ENCODE measurements at regions of chr12 and their contacts with region 1.

Region 1: DNA sequence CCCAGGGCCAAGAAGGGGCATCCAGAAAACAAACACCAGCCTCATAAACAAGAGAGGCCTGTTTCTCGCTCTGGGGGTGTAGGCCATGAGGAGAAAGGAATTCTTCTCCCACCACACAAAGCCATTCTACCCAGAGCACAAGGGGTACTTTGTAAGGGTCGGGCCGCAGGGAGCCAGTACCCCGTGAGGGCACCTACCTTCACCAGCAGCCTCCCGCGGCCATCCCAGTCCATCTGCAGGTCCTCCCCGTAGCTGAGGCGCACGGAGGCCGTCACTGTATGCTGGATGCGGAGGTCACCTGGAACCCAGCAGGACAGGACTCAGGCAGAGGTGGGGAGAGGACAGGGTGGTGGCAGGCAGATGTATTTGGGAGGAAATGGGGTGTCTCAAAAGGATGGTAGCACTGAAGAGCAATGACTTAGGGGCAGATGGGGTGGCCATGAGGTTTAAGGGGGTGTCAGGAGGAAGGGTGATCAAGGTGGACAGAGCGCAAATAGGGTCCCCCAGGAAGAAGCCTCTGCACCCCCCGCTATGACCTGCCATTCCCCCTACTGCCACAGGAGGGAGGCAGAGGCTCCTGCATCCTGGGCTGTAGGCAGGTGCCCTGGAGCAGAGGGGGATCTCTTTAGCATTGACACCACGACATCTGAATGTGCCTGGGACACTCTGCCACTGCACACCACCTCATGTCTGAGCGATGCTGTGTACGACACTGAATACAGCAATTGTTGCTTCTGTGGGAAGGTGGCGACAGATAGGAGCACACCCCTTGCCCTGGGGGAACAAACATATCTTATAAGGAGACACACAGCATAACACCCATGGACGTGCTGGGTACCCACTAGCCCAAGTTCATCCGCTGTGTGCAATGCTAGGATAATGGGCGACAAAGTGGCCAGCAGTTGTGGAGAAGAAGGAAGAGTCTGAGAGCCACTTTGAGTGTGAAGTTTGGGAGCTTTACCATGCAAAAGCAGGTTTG is 61.4 kb downstream of the VWF start:
- DNase-seq: peak; percentile 56
- ATAC-seq: peak; percentile 75
- H3K4me3 ChIP-seq: no peak overlapping the region
- H3K27ac ChIP-seq: no peak overlapping the region
- H3K4me1 ChIP-seq: no peaks in the 10 kb centered on the region
- H3K27me3 ChIP-seq: no peaks in the 10 kb centered on the region
- CTCF ChIP-seq: peak; percentile 81

Region 2: DNA sequence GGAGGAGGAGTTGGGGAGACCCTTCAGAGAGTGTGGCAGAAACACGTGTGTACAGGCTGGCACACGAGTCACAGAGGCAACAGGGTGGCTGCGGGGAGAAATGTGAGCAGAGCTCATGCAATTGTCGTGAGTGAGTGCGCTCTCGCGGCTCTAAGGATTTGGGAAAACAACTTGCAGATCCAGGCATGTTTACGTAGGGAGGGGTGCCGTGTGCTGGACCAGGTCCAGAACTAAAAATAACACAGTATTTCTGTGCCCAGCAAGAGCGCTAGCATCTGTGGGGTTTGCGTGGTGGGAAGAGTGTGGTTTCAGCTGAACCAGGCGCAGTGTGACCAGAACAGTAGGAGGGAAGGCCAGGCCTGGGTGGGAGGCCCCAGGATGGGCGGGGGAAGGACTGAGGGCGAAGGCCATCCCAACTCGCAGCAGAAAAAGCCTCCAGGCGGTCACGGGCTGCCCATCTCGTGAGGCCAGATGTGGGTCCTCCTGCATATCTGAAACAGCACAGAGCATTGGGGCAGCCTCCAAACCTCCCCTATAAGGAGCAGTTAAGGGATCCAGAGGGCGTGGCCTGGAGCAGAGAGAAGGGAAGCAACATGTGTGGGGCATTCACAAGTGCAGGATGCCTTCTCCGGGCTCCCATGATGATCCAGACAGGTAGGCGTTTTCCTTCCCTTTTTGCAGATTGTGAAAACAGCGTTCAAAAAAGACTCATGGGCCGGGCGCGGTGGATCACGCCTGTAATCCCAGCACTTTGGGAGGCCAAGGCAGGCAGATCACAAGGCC is 119.3 kb after region 1 on chr12:
- CTCF ChIA-PET with region 1: no interaction called
- POLR2A ChIA-PET with region 1: no interaction called
- intact Hi-C with region 1: loop called (anchors 5 kb)
- DNase-seq: peak; percentile 52
- ATAC-seq: peak; percentile 19
- H3K4me3 ChIP-seq: no peak overlapping the region
- H3K27ac ChIP-seq: peak overlapping the region; percentile 58
- H3K4me1 ChIP-seq: peaks cover 31% of the 10 kb centered on the region
- H3K27me3 ChIP-seq: no peaks in the 10 kb centered on the region
- CTCF ChIP-seq: no peak